Activated CD4-positive, alpha-beta memory T cell treated with anti-CD3 and anti-CD28 coated beads for 36 hours (primary cell): ENCODE measurements at regions of chr3 and their contacts with region 1.

Region 1: GRCh38 chr3:102229062-102229655 is 205.7 kb upstream of the ZPLD1 start:
- DNase-seq: peak; percentile 86
- H3K4me3 Mint-ChIP-seq: no peak overlapping the region
- H3K27ac Mint-ChIP-seq: no peak overlapping the region
- H3K4me1 Mint-ChIP-seq: peaks cover 15% of the 10 kb centered on the region
- H3K27me3 Mint-ChIP-seq: peaks cover 5% of the 10 kb centered on the region

Region 2: GRCh38 chr3:101803173-101803782 is 425.9 kb before region 1 on chr3:
- CTCF ChIA-PET with region 1: interaction called, 391 read pairs
- POLR2A ChIA-PET with region 1: no interaction called
- intact Hi-C with region 1: no loop called
- DNase-seq: peak; percentile 53
- H3K4me3 Mint-ChIP-seq: no peak overlapping the region
- H3K27ac Mint-ChIP-seq: no peak overlapping the region
- H3K4me1 Mint-ChIP-seq: peaks cover 29% of the 10 kb centered on the region
- H3K27me3 Mint-ChIP-seq: no peaks in the 10 kb centered on the region

Region 3: DNA sequence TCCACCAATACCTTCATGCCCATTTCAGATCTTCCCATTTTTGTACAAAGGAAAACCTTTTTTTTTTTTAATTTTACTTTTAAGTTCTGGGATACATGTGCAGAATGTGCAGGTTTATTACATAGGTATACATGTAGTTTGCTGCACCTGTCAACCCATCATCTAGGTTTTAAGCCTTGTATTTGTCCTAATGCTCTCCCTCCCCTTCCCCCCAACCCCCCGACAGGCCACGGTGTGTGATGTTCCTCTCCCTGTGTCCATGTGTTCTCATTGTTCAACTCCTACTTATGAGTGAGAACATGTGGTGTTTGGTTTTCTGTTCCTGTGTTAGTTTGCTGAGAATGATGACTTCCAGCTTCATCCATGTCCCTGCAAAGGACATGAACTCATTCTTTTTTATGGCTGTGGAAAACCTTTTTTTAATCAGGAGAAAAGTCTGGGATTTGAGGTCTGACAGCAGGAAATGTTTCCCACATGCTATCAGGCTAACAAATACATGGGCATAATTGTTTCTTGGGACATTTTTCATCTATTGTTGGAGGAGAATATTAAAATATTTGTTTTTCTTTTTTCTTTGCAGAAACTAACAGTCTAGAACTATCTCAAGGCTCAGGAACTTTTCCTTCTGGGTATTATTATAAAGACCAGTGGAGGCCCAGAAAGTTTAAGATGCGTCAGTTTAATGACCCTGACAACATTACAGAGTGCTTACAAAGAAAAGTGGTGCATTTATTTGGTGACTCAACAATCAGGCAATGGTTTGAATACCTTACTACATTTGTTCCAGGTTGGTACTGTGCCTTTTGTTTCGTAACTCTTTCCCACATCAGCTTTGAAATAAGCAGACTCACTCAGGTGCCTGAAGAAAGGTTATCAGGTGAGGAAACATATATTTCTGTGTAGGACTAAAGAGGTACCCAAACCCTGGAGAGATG is 412.7 kb before region 1 on chr3:
- CTCF ChIA-PET with region 1: interaction called, 391 read pairs
- POLR2A ChIA-PET with region 1: no interaction called
- intact Hi-C with region 1: loop called (anchors 1 kb)
- DNase-seq: no peak
- H3K4me3 Mint-ChIP-seq: no peak overlapping the region
- H3K27ac Mint-ChIP-seq: no peak overlapping the region
- H3K4me1 Mint-ChIP-seq: peaks cover 35% of the 10 kb centered on the region
- H3K27me3 Mint-ChIP-seq: no peaks in the 10 kb centered on the region

Region 4: DNA sequence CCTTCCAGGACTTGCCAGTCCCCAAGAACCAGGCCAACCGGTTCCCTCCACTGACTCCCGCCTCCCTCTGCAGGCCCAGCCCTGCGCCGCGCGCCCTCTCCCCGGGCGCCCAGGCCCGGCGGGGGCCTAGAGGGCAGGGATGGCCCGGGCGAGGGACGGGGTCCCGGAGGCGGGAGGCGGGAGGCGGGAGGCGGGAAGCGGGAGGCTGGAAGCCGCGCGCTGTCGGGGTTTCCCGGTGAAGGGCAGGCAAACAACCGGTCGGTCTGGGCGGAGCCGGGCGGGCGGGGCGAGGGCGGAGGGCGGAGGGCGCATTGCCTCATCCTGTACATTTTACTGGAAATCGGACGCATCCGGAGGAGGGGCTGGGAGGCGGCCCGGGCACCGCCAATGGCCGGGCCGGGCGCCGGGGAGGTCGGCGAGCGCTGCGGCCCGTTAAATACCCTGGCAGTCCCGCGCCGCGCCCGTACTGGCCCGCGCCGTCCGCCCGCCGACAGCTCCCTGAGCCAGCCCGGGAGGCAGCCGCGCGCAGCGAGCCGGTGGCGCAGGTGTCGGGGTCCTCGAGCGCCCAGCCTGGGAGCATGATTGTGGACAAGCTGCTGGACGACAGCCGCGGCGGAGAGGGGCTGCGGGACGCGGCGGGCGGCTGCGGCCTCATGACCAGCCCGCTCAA is 380.0 kb before region 1 on chr3 and contains the start of gene NFKBIZ:
- CTCF ChIA-PET with region 1: interaction called, 19 read pairs
- POLR2A ChIA-PET with region 1: interaction called, 4 read pairs
- intact Hi-C with region 1: loop called (anchors 1 kb)
- DNase-seq: peak; percentile 97
- H3K4me3 Mint-ChIP-seq: peak within 1 kb of the TSS; percentile 92
- H3K27ac Mint-ChIP-seq: peak within 1 kb of the TSS; percentile 99
- H3K4me1 Mint-ChIP-seq: peaks cover 45% of the 10 kb centered on the region
- H3K27me3 Mint-ChIP-seq: no peaks in the 10 kb centered on the region
- total RNA-seq, gene NFKBIZ: 65.9 to 74.9 TPM

Region 5: GRCh38 chr3:102240720-102241119 is 11.6 kb after region 1 on chr3:
- CTCF ChIA-PET with region 1: interaction called, 29 read pairs
- POLR2A ChIA-PET with region 1: interaction called, 4 read pairs
- intact Hi-C with region 1: no loop called
- DNase-seq: no peak
- H3K4me3 Mint-ChIP-seq: no peak overlapping the region
- H3K27ac Mint-ChIP-seq: no peak overlapping the region
- H3K4me1 Mint-ChIP-seq: no peaks in the 10 kb centered on the region
- H3K27me3 Mint-ChIP-seq: peaks cover 2% of the 10 kb centered on the region

Region 6: GRCh38 chr3:102536456-102536855 is 307.3 kb after region 1 on chr3:
- CTCF ChIA-PET with region 1: interaction called, 171 read pairs
- POLR2A ChIA-PET with region 1: no interaction called
- intact Hi-C with region 1: loop called (anchors 1 kb)
- DNase-seq: no peak
- H3K4me3 Mint-ChIP-seq: no peak overlapping the region
- H3K27ac Mint-ChIP-seq: no peak overlapping the region
- H3K4me1 Mint-ChIP-seq: peaks cover 3% of the 10 kb centered on the region
- H3K27me3 Mint-ChIP-seq: peaks cover 3% of the 10 kb centered on the region